HCT116 (cell line): ENCODE measurements at regions of chr18 and their contacts with region 1.

Region 1: GRCh38 chr18:24584813-24585212 is 124.4 kb downstream of the HRH4 start:
- DNase-seq: no peak
- ATAC-seq: no peak
- H3K4me3 ChIP-seq: no peak overlapping the region
- H3K27ac ChIP-seq: no peak overlapping the region
- H3K4me1 ChIP-seq: no peaks in the 10 kb centered on the region
- H3K27me3 ChIP-seq: peaks cover 34% of the 10 kb centered on the region
- CTCF ChIP-seq: no peak
- POLR2A ChIP-seq: no peak
- RAD21 ChIP-seq: no peak

Region 2: DNA sequence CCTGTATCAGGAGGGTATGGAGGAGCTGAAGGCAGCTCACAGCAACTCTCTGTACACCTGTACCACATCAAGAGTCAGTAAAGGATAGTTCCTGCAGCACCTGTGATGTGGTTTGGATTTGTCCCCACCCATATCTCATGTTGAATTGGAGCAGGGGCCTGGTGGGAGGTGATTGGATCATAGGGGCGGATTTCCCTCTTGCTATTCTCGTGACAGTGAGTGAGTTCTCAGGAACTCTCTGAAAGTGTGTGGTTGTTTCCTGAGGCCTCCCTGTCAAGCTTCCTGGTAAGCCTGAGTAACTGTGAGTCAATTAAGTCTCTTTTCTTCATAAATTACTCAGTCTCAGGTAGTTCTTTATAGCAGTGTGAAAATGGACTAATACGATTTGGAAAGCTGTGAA is 216.1 kb before region 1 on chr18:
- CTCF ChIA-PET with region 1: no interaction called
- POLR2A ChIA-PET with region 1: no interaction called
- RAD21 ChIA-PET with region 1: no interaction called
- intact Hi-C with region 1: loop called (anchors 5 kb)
- DNase-seq: no peak
- ATAC-seq: no peak
- H3K4me3 ChIP-seq: no peak overlapping the region
- H3K27ac ChIP-seq: no peak overlapping the region
- H3K4me1 ChIP-seq: no peaks in the 10 kb centered on the region
- H3K27me3 ChIP-seq: no peaks in the 10 kb centered on the region
- CTCF ChIP-seq: no peak
- POLR2A ChIP-seq: no peak
- RAD21 ChIP-seq: no peak

Region 3: GRCh38 chr18:24778810-24779418 is 194.1 kb after region 1 on chr18:
- CTCF ChIA-PET with region 1: no interaction called
- POLR2A ChIA-PET with region 1: no interaction called
- RAD21 ChIA-PET with region 1: no interaction called
- intact Hi-C with region 1: no loop called
- DNase-seq: no peak
- ATAC-seq: no peak
- H3K4me3 ChIP-seq: no peak overlapping the region
- H3K27ac ChIP-seq: no peak overlapping the region
- H3K4me1 ChIP-seq: no peaks in the 10 kb centered on the region
- H3K27me3 ChIP-seq: peaks cover 26% of the 10 kb centered on the region
- CTCF ChIP-seq: no peak
- POLR2A ChIP-seq: no peak
- RAD21 ChIP-seq: no peak